ENCODE measurements at regions of chr11 and their contacts with region 1.

Region 1: GRCh38 chr11:47578524-47579460 is at the starts of genes KBTBD4 and NDUFS3:
- DNase-seq: peak; percentile 89
- H3K4me3 Mint-ChIP-seq: peak within 1 kb of the TSS; percentile 96
- H3K27ac Mint-ChIP-seq: peak within 1 kb of the TSS; percentile 98
- H3K4me1 Mint-ChIP-seq: peaks cover 35% of the 10 kb centered on the region
- H3K27me3 Mint-ChIP-seq: no peaks in the 10 kb centered on the region
- total RNA-seq, gene KBTBD4: 16.3 and 19.0 TPM in 2 replicates
- total RNA-seq, gene NDUFS3: 148 and 152 TPM in 2 replicates

Region 2: GRCh38 chr11:46936138-46937110 is 642.4 kb before region 1 on chr11 and contains the start of gene CSTPP1:
- intact Hi-C with region 1: loop called (anchors 5 kb)
- DNase-seq: peak; percentile 89
- H3K4me3 Mint-ChIP-seq: peak within 1 kb of the TSS; percentile 92
- H3K27ac Mint-ChIP-seq: peak within 1 kb of the TSS; percentile 88
- H3K4me1 Mint-ChIP-seq: peaks cover 14% of the 10 kb centered on the region
- H3K27me3 Mint-ChIP-seq: peaks cover 7% of the 10 kb centered on the region
- total RNA-seq, gene CSTPP1: 15.1 and 16.7 TPM in 2 replicates

Region 3: DNA sequence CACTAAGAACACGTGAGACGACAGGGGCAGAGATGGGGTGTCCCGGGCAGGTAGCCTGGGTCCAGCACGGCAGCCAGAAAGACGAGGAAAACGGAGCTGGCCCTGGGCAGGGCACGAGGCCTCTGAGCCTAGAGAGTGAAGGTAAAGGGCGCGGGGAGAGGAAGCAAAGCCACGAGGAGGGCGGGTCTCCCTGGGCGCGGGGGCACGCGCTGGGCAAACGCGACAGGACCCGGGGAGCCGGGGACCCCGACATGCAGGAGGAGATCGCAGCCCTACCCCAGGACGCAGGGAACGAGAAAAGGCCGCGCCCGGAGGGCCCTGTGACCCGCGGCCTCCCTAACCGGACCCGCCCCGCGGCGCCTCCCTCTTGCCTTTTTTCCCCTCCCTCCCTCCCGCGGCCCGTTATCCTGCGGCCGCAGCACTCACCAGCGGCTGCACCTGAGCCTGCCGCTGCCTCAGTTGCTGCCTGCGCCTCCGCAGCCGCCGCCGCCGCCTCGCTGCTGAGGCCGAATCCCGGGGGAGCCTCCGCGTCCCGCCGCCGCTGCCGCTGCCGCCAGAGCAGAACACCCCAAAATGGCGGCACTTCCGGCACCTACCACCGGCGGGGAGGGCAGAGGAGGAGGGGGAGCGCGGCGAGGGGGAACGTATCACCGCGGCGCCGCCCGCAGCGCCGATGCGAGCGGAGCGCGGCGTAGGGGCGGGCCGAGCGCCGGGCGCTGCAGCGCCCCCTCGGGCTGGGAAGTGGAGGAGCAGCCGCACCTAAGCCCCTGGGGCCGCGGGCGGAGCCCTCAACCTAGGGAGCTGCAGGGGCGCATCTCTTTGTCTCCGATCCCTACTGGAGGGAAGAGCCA is 26.0 kb before region 1 on chr11 and contains the start of gene CELF1:
- intact Hi-C with region 1: loop called (anchors 1 kb)
- DNase-seq: peak; percentile 92
- H3K4me3 Mint-ChIP-seq: peak within 1 kb of the TSS; percentile 99
- H3K27ac Mint-ChIP-seq: peak within 1 kb of the TSS; percentile 97
- H3K4me1 Mint-ChIP-seq: peaks cover 40% of the 10 kb centered on the region
- H3K27me3 Mint-ChIP-seq: no peaks in the 10 kb centered on the region
- total RNA-seq, gene CELF1: 148 and 155 TPM in 2 replicates

Region 4: GRCh38 chr11:47616726-47617416 is 38.1 kb after region 1 on chr11:
- intact Hi-C with region 1: loop called (anchors 1 kb)
- DNase-seq: no peak
- H3K4me3 Mint-ChIP-seq: no peak overlapping the region
- H3K27ac Mint-ChIP-seq: no peak overlapping the region
- H3K4me1 Mint-ChIP-seq: peaks cover 11% of the 10 kb centered on the region
- H3K27me3 Mint-ChIP-seq: no peaks in the 10 kb centered on the region

Region 5: DNA sequence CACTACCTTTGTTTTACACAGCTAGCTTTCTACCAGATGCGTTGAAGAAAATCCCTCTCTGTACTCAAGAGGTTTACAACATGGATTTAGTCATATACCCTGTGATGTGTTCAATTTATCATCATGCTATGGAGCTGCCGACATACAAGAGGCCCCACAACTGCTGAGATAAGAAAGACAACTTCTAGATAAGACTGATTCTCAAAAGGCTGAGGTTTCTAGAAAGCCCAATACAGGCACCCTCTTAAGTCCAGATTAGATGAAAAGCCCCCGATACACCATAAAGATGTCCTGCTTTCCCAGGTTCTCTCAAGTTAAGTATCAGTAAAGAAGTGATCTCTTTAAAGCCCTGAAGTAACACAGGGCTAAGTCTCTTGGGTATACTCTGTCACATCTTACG is 49.2 kb after region 1 on chr11:
- intact Hi-C with region 1: no loop called
- DNase-seq: no peak
- H3K4me3 Mint-ChIP-seq: no peak overlapping the region
- H3K27ac Mint-ChIP-seq: no peak overlapping the region
- H3K4me1 Mint-ChIP-seq: no peaks in the 10 kb centered on the region
- H3K27me3 Mint-ChIP-seq: no peaks in the 10 kb centered on the region

Region 6: DNA sequence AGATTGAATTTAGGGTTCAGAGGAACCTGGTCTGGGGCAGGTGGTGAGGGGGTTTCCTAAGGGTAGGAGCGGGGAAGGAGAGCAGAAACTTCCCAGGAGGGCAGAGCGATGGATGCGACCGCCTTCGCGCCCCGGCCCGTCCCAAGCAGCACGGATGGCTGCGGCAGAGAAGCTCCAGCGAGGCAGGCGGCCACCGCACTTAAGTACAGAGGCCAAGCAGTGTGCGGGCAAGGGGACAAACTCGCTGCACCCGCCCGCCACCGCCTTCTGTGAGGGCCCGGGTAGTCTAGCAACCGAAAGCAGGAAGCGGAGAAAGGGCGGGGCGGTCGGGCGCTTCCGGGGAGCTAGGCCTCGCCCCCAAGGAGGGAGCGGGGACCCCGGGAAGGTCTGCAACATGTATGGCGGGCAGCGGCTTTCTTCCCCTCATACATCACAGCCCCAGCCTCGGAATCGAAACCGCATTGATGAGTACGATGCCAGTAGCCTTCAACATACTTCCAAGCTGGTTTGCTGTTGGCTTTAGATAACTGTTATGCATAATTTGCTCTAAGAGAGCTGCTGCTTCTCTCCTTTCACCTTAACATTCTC is 136.4 kb after region 1 on chr11 and contains the start of gene AGBL2:
- intact Hi-C with region 1: loop called (anchors 2 kb)
- DNase-seq: peak; percentile 84
- H3K4me3 Mint-ChIP-seq: peak within 1 kb of the TSS; percentile 93
- H3K27ac Mint-ChIP-seq: peak within 1 kb of the TSS; percentile 96
- H3K4me1 Mint-ChIP-seq: peaks cover 31% of the 10 kb centered on the region
- H3K27me3 Mint-ChIP-seq: no peaks in the 10 kb centered on the region
- total RNA-seq, gene AGBL2: 3.2 and 5.5 TPM in 2 replicates

Region 7: DNA sequence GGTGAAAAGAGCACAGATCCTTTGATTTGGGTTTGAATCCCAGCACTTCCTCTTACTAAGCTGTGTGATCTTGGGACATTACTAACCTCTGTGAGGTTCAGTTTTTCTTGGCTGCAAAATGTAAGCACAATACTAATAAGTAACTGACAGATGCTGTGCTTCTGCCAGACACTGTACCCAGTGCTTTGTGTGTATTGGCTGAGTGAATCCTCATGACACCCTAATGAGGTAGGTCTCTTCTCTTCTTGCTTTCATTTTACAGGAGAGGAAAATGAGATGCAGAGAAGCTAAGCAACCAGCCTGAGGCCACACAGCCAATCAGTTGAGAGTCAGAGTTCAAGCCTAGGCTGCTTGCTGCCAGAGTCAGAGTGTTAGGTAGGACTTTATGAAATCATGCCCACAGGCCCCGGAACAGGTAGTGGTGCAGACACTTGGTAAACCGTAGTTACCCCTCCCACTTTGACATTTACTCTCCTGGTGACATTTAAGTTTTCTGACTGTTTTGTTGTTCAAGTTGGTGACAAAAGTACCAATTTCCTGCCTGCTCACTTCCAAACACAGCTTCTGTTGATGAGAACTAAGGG is 422.7 kb after region 1 on chr11:
- intact Hi-C with region 1: no loop called
- DNase-seq: peak; percentile 87
- H3K4me3 Mint-ChIP-seq: peak overlapping the region; percentile 72
- H3K27ac Mint-ChIP-seq: peak overlapping the region; percentile 97
- H3K4me1 Mint-ChIP-seq: peaks cover 82% of the 10 kb centered on the region
- H3K27me3 Mint-ChIP-seq: no peaks in the 10 kb centered on the region

Measured in activated T-helper 1 cell treated with anti-CD3 and anti-CD28 coated beads, Interleukin-12 subunit alpha, Interleukin-12 subunit beta, Interleukin-2, Interleukin-4 antibody, amounts not matched to agents 30 ng/mL and 10 ng/mL and 1 ng/mL, durations not matched to agents 14 hours and 24 hours and 36 hours (primary cell).